PC-3 (cell line): ENCODE measurements at regions of chr11 and their contacts with region 1.

Region 1: GRCh38 chr11:44927174-44927661 is 23.5 kb downstream of the TP53I11 start:
- DNase-seq: peak; percentile 79
- ATAC-seq: peak; percentile 89
- H3K4me3 ChIP-seq: no peak overlapping the region
- H3K27ac ChIP-seq: no peak overlapping the region
- H3K4me1 ChIP-seq: no peaks in the 10 kb centered on the region
- H3K27me3 ChIP-seq: no peaks in the 10 kb centered on the region
- CTCF ChIP-seq: peak; percentile 89

Region 2: DNA sequence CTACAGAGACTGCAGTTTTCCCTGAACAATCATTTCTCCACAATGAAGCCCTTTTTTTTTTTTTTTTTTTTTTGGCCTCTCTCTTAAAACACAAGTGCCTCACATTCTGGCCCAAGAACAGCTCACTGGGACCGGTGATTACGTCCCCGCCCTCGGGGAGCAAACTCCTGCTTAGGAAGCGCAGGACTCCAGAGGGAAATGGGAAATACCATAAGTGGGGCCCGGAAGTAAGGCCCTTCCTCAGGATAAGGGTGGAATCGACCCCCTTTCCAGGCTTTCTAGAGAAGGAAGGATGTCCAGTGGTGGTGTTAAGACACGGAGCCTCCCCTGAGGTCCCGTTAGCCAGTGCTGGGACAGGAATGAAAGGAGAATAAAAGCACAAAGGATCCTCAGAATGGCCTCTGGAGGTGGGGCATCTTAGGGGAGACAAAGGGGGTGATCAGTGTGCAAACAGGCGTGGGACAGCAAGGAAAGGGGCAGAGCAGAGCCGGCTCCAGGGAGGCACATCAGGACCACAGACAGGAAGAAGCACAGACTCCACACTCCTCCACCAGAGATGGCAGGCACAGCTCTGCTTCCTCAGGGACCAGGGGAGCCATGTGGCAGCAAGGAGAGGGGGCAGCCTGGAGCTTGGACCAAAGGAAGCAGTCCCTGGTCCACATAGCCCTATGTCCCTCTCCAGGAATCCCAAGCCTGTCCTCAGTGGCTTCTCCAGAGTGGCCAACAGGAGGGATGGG is 676.9 kb after region 1 on chr11:
- CTCF ChIA-PET with region 1: interaction called, 14 read pairs
- POLR2A ChIA-PET with region 1: no interaction called
- intact Hi-C with region 1: no loop called
- DNase-seq: no peak
- ATAC-seq: no peak
- H3K4me3 ChIP-seq: no peak overlapping the region
- H3K27ac ChIP-seq: no peak overlapping the region
- H3K4me1 ChIP-seq: no peaks in the 10 kb centered on the region
- H3K27me3 ChIP-seq: peaks cover 23% of the 10 kb centered on the region
- CTCF ChIP-seq: no peak